ENCODE measurements at regions of chr1 and their contacts with region 1.

Region 1: GRCh38 chr1:196148367-196148970 is 459.8 kb downstream of the KCNT2 start:
- DNase-seq: peak; percentile 33 to 69 (median 56)
- H3K4me3 ChIP-seq: no peak overlapping the region
- H3K27ac ChIP-seq: no peak overlapping the region
- H3K4me1 ChIP-seq: no peaks in the 10 kb centered on the region
- H3K27me3 ChIP-seq: no peaks in the 10 kb centered on the region

Region 2: GRCh38 chr1:196043268-196043667 is 105.2 kb before region 1 on chr1:
- CTCF ChIA-PET with region 1: no interaction called
- POLR2A ChIA-PET with region 1: no interaction called
- DNase-seq: no peak
- H3K4me3 ChIP-seq: no peak overlapping the region
- H3K27ac ChIP-seq: no peak overlapping the region
- H3K4me1 ChIP-seq: no peaks in the 10 kb centered on the region
- H3K27me3 ChIP-seq: no peaks in the 10 kb centered on the region

Region 3: GRCh38 chr1:196207612-196208217 is 59.2 kb after region 1 on chr1:
- CTCF ChIA-PET with region 1: no interaction called
- POLR2A ChIA-PET with region 1: no interaction called
- DNase-seq: no peak
- H3K4me3 ChIP-seq: no peak overlapping the region
- H3K27ac ChIP-seq: no peak overlapping the region
- H3K4me1 ChIP-seq: no peaks in the 10 kb centered on the region
- H3K27me3 ChIP-seq: no peaks in the 10 kb centered on the region

Region 4: DNA sequence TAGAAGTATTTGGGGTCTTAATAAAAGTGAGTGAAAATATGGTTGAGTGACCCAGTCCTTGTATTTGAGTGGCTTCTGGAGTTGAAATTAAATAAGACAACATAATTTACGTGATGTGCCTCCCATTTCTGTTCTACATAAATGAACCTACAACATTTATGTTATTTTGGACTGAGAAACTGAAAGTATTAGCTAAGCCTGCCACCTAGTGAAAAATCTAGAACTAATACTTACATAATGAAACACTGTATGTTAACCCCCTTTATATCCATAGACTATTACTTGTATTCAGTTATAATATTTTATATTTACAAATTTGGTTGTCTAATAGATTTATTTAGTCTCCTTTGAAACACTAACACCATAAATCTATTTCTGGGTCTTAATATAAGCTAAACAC is 160.9 kb after region 1 on chr1:
- CTCF ChIA-PET with region 1: interaction called, 23 read pairs
- POLR2A ChIA-PET with region 1: no interaction called
- DNase-seq: peak; percentile 31 to 62 (median 59)
- H3K4me3 ChIP-seq: no peak overlapping the region
- H3K27ac ChIP-seq: no peak overlapping the region
- H3K4me1 ChIP-seq: no peaks in the 10 kb centered on the region
- H3K27me3 ChIP-seq: no peaks in the 10 kb centered on the region

Measured in common myeloid progenitor, CD34-positive (primary cell).